ENCODE measurements at regions of chr10 and their contacts with region 1.

Region 1: DNA sequence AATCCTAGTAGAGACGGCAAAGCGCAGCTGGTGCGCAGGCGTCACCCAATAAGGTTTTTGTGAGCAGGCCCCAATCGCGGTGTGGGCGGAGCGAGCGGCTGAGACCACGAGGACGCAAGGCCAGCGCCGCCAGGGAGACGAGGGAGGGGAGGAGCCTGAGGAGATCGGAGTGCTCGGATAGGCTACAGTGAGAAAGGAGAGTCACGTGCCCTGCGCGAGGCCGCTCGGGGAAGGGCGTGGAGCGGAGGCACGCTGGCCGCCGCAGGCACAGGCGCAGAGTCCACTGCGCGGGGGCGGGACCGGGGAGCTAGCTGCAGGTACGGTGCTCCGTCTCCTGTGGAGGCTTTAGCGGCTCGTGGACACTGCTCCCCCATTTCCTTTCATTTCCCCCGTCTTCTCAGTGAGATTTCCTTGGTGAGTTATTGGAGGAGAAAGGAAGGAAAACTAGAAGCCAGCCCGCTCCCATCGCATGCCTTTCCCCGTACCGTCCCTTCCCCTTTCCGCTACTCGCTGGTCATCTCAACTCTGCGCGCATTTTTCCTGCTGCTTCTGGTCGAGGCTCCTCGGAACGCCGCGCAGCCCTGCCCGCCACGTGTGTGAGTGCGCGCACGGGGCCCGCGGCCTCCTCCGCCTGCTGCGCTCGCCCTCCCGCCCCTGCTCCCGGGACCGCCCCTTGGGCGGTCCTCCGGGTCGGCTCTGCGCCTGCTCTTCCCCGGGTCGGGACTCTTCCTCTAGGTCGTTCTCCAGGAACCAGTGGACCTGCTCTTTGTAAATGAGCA is at the start of gene THNSL1:
- DNase-seq: peak; percentile 97
- H3K4me3 Mint-ChIP-seq: peak within 1 kb of the TSS; percentile 89
- H3K27ac Mint-ChIP-seq: peak within 1 kb of the TSS; percentile 95
- H3K4me1 Mint-ChIP-seq: peaks cover 14% of the 10 kb centered on the region
- H3K27me3 Mint-ChIP-seq: peaks cover 4% of the 10 kb centered on the region
- total RNA-seq, gene THNSL1: 3.1 TPM in 2 replicates

Region 2: GRCh38 chr10:24724381-24725228 is 292.0 kb before region 1 on chr10:
- intact Hi-C with region 1: loop called (anchors 1 kb)
- DNase-seq: peak; percentile 92
- H3K4me3 Mint-ChIP-seq: peak overlapping the region; percentile 86
- H3K27ac Mint-ChIP-seq: peak overlapping the region; percentile 87
- H3K4me1 Mint-ChIP-seq: peaks cover 19% of the 10 kb centered on the region
- H3K27me3 Mint-ChIP-seq: peaks cover 4% of the 10 kb centered on the region

Region 3: GRCh38 chr10:24901686-24902399 is 114.7 kb before region 1 on chr10:
- intact Hi-C with region 1: loop called (anchors 5 kb)
- DNase-seq: no peak
- H3K4me3 Mint-ChIP-seq: no peak overlapping the region
- H3K27ac Mint-ChIP-seq: peak overlapping the region; percentile 57
- H3K4me1 Mint-ChIP-seq: peaks cover 36% of the 10 kb centered on the region
- H3K27me3 Mint-ChIP-seq: no peaks in the 10 kb centered on the region

Region 4: GRCh38 chr10:24952707-24953645 is 63.6 kb before region 1 on chr10:
- intact Hi-C with region 1: loop called (anchors 1 kb)
- DNase-seq: peak; percentile 15
- H3K4me3 Mint-ChIP-seq: peak overlapping the region; percentile 64
- H3K27ac Mint-ChIP-seq: peak overlapping the region; percentile 29
- H3K4me1 Mint-ChIP-seq: peaks cover 9% of the 10 kb centered on the region
- H3K27me3 Mint-ChIP-seq: peaks cover 10% of the 10 kb centered on the region

Region 5: GRCh38 chr10:25080880-25081581 is 64.5 kb after region 1 on chr10:
- intact Hi-C with region 1: loop called (anchors 5 kb)
- DNase-seq: peak; percentile 32
- H3K4me3 Mint-ChIP-seq: no peak overlapping the region
- H3K27ac Mint-ChIP-seq: no peak overlapping the region
- H3K4me1 Mint-ChIP-seq: peaks cover 6% of the 10 kb centered on the region
- H3K27me3 Mint-ChIP-seq: peaks cover 13% of the 10 kb centered on the region